ENCODE measurements at regions of chr6 and their contacts with region 1.

Region 1: DNA sequence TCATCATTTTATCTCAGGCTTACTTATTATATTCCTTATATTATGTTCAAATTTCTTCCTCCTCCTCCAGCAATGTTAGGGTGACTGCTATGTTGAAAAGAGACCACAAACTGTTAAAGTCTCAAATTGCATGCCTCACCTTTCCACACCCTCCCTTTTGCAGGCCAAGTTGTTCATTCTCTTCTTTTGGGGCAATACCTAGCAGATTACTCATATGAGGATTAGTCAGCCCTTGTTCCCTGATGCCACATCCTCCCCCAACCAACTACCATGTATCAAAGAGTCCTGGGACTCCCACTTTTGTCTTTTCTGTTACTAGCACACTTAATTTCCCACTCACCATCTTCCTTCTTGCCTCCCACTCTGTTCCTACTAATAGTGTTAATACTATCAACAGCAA is 434.7 kb downstream of the BCKDHB start:
- DNase-seq: peak; percentile 58
- H3K4me3 Mint-ChIP-seq: no peak overlapping the region
- H3K27ac Mint-ChIP-seq: peak overlapping the region; percentile 9
- H3K4me1 Mint-ChIP-seq: peaks cover 66% of the 10 kb centered on the region
- H3K27me3 Mint-ChIP-seq: no peaks in the 10 kb centered on the region
- CTCF ChIP-seq: no peak

Region 2: GRCh38 chr6:80440496-80441115 is 100.6 kb before region 1 on chr6:
- CTCF ChIA-PET with region 1: no interaction called
- intact Hi-C with region 1: loop called (anchors 5 kb)
- DNase-seq: no peak
- H3K4me3 Mint-ChIP-seq: peak overlapping the region; percentile 37
- H3K27ac Mint-ChIP-seq: peak overlapping the region; percentile 97
- H3K4me1 Mint-ChIP-seq: peaks cover 41% of the 10 kb centered on the region
- H3K27me3 Mint-ChIP-seq: no peaks in the 10 kb centered on the region
- CTCF ChIP-seq: no peak

Measured in Calu3 (cell line).